GM13976 (cell line): ENCODE measurements at regions of chr3 and their contacts with region 1.

Region 1: DNA sequence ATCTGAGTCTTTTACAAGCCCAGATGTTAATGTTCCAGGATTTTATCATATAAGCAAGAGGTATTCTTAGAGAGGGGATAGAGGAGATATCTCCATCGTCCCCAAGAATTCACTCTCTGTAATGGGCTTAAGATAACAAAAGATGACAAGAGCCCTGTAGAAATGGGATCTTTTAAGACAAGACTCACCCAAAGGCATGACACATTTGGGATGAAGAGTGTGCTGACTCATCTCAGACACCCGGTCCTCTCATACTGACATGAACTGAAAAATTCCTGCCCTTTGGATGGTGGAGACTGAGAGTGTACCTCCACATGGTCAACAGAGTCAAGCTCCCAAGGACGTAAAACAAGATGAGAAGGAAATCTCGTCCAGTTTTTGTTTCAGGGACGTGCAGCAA is 11.0 kb downstream of the LEKR1 start:
- DNase-seq: no peak
- CTCF ChIP-seq: no peak

Region 2: GRCh38 chr3:156291272-156292123 is 545.6 kb before region 1 on chr3:
- in situ Hi-C with region 1: no loop called
- DNase-seq: peak; percentile 43
- CTCF ChIP-seq: no peak

Region 3: GRCh38 chr3:157059661-157060060 is 222.5 kb after region 1 on chr3:
- in situ Hi-C with region 1: loop called (anchors 10 kb)
- DNase-seq: no peak
- CTCF ChIP-seq: no peak